Activated CD4-positive, alpha-beta memory T cell treated with anti-CD3 and anti-CD28 coated beads, Interleukin-2, amount 10 ng/mL, durations not matched to agents 7 days and 5 days (primary cell): ENCODE measurements at regions of chr5 and their contacts with region 1.

Region 1: DNA sequence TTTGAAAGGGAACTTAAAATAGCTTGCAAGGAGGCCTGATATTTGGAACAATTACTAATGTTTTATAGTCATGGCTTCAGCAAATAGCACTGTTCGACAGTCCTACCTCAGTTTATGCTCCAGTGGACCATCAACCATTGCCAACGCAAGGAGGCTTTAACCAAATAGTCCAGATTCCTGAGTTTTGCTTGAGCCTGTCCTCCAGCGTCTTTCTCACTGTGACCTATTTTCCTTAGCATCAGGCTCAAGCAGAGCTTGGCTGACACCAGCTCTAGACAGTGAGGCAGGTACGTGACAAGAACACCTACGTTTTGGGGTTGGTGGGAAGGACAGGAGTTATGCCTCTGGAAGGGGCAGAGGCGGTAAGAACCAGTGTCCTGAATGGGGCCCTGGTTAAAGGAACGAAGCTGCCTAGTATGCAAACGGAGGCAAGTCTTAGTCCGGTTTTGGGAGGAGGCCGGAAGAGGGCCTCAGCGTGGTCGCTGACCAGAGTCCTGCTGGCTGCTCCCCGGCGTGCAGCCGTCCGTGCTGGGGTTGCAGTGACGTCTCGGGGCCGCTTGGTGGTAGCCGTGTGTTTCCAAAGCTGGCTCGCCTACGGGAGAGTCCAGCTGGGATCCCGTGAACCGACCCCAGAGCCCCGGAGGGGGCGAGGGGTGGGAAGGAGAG is 998 bp upstream of the FGF18 start:
- DNase-seq: peak; percentile 64
- H3K4me3 Mint-ChIP-seq: peak overlapping the region; percentile 64
- H3K27ac Mint-ChIP-seq: no peak overlapping the region
- H3K4me1 Mint-ChIP-seq: peaks cover 10% of the 10 kb centered on the region
- H3K27me3 Mint-ChIP-seq: peaks cover 30% of the 10 kb centered on the region

Region 2: DNA sequence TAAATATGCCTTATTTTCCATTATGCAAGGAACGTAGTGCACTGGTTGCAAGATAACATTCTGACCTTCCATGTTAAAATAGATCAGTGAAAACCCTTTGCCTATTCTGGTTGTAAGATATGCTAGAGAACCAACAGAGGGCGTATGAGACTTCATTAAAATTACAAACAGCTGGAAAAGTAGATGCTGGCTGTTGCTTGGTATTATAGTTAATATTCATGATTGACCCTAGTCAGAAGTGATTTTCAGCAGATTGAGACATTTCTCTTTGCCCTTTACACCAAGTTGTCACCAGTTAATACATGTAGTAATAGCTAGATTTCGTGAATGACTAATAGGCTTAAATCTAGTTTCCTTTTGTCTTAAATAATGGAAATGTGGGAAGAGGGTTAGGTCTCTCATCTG is 12.8 kb before region 1 on chr5:
- CTCF ChIA-PET with region 1: interaction called, 17 read pairs
- POLR2A ChIA-PET with region 1: no interaction called
- DNase-seq: no peak
- H3K4me3 Mint-ChIP-seq: no peak overlapping the region
- H3K27ac Mint-ChIP-seq: no peak overlapping the region
- H3K4me1 Mint-ChIP-seq: peaks cover 52% of the 10 kb centered on the region
- H3K27me3 Mint-ChIP-seq: no peaks in the 10 kb centered on the region

Region 3: GRCh38 chr5:171606414-171607024 is 188.1 kb after region 1 on chr5:
- CTCF ChIA-PET with region 1: interaction called, 11 read pairs
- POLR2A ChIA-PET with region 1: no interaction called
- DNase-seq: no peak
- H3K4me3 Mint-ChIP-seq: no peak overlapping the region
- H3K27ac Mint-ChIP-seq: no peak overlapping the region
- H3K4me1 Mint-ChIP-seq: no peaks in the 10 kb centered on the region
- H3K27me3 Mint-ChIP-seq: peaks cover 44% of the 10 kb centered on the region